PC-3 (cell line): ENCODE measurements at regions of chr12 and their contacts with region 1.

Region 1: DNA sequence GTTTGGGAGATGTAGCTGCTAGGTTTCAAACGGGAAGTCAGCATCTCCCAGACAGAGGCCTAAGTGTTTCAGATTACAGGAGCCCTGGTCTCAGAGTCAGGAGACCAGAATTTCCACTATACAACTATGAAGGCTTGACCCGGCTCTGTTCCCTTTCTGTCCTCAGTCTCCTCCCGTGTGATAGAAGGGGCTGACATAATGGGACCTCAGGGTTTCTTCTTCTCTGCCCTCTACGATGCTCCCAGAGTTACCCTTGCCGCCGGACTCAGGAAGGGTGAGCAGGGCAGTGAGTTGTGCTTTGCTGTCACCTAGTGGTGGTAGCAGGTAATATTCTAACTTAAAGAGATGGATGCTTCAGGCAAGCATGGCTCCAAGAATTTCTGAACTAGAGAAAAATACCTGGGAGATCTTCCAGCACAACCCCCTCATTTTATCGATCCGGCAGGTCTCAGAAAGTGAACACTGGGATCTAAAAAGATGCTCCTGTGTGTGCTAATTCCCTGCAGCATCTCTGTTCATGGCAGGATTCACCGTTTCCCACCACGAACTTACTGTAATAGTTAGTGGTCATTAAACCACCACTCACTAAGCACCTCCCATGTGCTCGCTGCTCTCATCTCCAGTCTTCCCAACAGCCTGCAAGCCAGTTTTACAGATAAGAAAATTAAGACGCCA is 84.4 kb downstream of the VWF start:
- DNase-seq: peak; percentile 74
- ATAC-seq: peak; percentile 72
- H3K4me3 ChIP-seq: no peak overlapping the region
- H3K27ac ChIP-seq: no peak overlapping the region
- H3K4me1 ChIP-seq: peaks cover 9% of the 10 kb centered on the region
- H3K27me3 ChIP-seq: no peaks in the 10 kb centered on the region
- CTCF ChIP-seq: peak; percentile 85

Region 2: DNA sequence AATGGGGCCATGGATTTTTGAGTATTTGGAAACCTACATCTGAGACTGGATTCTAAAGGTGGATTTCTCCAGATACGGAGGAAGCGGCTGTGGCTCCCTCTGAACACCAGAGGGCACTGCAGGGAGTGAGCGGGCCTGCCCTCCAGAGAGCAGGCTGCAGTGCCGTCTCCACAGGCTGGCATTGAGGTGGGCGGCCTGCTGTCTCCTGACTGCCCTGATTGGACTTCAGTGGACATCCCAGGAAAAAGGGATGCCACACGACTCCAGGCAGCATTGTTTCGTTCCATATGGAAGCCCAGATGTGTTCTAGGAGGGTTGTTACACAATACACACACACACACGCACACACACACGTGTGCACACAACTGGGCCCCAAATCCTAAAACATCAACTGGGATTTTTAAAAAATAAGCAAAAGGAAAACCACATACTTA is 74.1 kb before region 1 on chr12:
- CTCF ChIA-PET with region 1: no interaction called
- POLR2A ChIA-PET with region 1: no interaction called
- intact Hi-C with region 1: loop called (anchors 1 kb)
- DNase-seq: peak; percentile 54
- ATAC-seq: peak; percentile 90
- H3K4me3 ChIP-seq: no peak overlapping the region
- H3K27ac ChIP-seq: no peak overlapping the region
- H3K4me1 ChIP-seq: no peaks in the 10 kb centered on the region
- H3K27me3 ChIP-seq: peaks cover 3% of the 10 kb centered on the region; the same call in 1 of the 2 replicates
- CTCF ChIP-seq: peak; percentile 69

Region 3: DNA sequence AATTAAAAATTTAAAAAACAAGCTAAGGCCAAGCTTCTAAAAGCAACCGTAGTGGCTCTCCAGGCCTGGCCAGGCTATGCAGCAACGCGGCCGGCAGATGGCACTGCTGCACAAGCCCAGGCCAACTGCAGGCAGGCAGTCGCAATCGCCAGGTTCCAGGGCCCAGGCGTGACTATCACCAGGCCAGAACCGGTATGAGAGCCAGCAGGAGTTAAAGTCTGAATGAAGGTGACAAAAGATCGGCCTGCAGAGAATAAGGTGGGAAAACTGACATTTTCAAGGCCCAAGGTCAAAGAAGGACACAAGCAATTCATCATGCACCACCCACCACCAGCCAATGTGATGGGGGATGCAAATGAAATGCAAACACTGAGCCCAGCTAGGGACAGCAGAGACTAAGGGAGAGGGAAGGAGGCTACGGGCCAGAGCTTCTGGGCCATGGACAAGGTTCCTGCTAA is 51.3 kb before region 1 on chr12:
- CTCF ChIA-PET with region 1: interaction called, 42 read pairs
- POLR2A ChIA-PET with region 1: no interaction called
- intact Hi-C with region 1: loop called (anchors 1 kb)
- DNase-seq: peak; percentile 74
- ATAC-seq: peak; percentile 99
- H3K4me3 ChIP-seq: no peak overlapping the region
- H3K27ac ChIP-seq: no peak overlapping the region
- H3K4me1 ChIP-seq: 0 out of 2 replicates have a peak, but pooled peaks cover 5% of the 10 kb centered on the region
- H3K27me3 ChIP-seq: peaks cover 9% of the 10 kb centered on the region
- CTCF ChIP-seq: peak; percentile 93